Activated naive CD4-positive, alpha-beta T cell treated with anti-CD3 and anti-CD28 coated beads for 36 hours (primary cell): ENCODE measurements at regions of chr14 and their contacts with region 1.

Region 1: DNA sequence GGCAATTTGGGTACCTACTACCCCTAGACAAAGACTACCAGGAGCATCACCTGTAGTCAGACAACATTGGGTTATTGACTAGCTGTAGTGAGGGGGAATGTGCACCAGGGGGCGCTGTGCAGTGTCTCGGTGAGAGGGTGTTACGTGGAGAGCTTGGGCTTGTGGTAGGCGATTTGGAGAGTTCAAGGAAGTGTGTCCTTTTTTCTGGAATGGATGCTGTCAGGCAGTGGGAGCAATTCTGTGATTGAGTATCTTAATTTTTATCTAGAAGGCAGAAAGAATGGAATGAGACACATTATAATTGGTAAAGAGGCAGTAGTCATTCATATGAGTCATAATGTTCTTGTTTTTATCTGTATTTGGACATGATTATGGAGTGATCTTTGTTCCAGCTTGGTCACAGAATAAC is 187.7 kb downstream of the GALC start:
- DNase-seq: peak; percentile 78
- H3K4me3 Mint-ChIP-seq: no peak overlapping the region
- H3K27ac Mint-ChIP-seq: no peak overlapping the region
- H3K4me1 Mint-ChIP-seq: peaks cover 2% of the 10 kb centered on the region
- H3K27me3 Mint-ChIP-seq: peaks cover 4% of the 10 kb centered on the region

Region 2: GRCh38 chr14:87679866-87680265 is 125.5 kb before region 1 on chr14:
- CTCF ChIA-PET with region 1: no interaction called
- intact Hi-C with region 1: no loop called
- DNase-seq: no peak
- H3K4me3 Mint-ChIP-seq: no peak overlapping the region
- H3K27ac Mint-ChIP-seq: no peak overlapping the region
- H3K4me1 Mint-ChIP-seq: no peaks in the 10 kb centered on the region
- H3K27me3 Mint-ChIP-seq: no peaks in the 10 kb centered on the region

Region 3: GRCh38 chr14:87745507-87746118 is 59.7 kb before region 1 on chr14:
- CTCF ChIA-PET with region 1: interaction called, 10 read pairs
- intact Hi-C with region 1: no loop called
- DNase-seq: peak; percentile 43
- H3K4me3 Mint-ChIP-seq: no peak overlapping the region
- H3K27ac Mint-ChIP-seq: no peak overlapping the region
- H3K4me1 Mint-ChIP-seq: no peaks in the 10 kb centered on the region
- H3K27me3 Mint-ChIP-seq: no peaks in the 10 kb centered on the region

Region 4: GRCh38 chr14:87816416-87816815 is 11.1 kb after region 1 on chr14:
- CTCF ChIA-PET with region 1: interaction called, 10 read pairs
- intact Hi-C with region 1: no loop called
- DNase-seq: no peak
- H3K4me3 Mint-ChIP-seq: no peak overlapping the region
- H3K27ac Mint-ChIP-seq: no peak overlapping the region
- H3K4me1 Mint-ChIP-seq: no peaks in the 10 kb centered on the region
- H3K27me3 Mint-ChIP-seq: no peaks in the 10 kb centered on the region

Region 5: DNA sequence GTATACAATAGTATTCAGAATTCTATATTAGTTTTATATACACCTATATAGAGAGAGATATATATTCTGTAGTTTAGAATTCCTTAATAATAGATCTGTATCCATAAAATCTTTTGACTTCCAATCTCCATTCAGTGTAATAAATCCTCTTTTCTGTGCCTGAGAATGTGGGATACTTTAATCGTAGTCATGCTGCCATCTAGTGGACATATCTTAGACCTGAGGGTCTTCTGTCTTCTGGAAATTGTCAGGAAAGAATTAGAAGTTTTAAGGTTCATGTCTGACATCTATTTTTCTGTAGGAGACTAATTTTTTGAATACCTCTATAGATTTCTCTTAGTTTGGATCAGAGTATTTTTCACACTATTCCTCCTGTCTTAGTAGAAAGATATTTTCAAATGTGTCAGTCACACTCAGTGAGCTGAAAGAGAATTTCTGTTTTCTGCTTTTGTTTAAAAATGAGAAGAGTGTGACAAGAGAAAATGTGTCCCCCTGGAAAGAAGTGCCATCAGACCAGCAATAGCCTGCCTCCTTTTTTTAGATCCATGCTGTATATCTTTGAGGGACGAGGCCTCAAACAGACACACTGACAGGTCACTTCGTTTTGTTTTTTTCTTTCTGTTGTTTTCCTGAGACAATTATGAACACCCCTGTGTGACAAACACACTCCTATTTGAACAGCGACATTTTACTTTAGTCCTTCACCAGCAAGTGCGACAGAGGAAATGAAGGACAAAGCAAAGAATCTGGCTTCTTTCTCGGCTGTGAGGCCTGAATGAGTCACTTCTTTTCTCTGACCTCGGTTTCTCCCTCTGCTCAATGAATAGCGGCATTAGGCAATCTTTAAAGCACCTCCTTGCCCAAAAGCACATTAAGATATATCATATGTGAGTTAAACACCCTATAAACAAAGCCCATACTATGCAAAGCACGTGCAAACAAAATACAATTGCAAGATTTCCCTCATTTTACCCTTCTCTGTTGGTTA is 91.4 kb after region 1 on chr14:
- CTCF ChIA-PET with region 1: interaction called, 64 read pairs
- intact Hi-C with region 1: loop called (anchors 1 kb)
- DNase-seq: peak; percentile 9
- H3K4me3 Mint-ChIP-seq: no peak overlapping the region
- H3K27ac Mint-ChIP-seq: no peak overlapping the region
- H3K4me1 Mint-ChIP-seq: no peaks in the 10 kb centered on the region
- H3K27me3 Mint-ChIP-seq: no peaks in the 10 kb centered on the region